ENCODE measurements at regions of chr4 and their contacts with region 1.

Region 1: DNA sequence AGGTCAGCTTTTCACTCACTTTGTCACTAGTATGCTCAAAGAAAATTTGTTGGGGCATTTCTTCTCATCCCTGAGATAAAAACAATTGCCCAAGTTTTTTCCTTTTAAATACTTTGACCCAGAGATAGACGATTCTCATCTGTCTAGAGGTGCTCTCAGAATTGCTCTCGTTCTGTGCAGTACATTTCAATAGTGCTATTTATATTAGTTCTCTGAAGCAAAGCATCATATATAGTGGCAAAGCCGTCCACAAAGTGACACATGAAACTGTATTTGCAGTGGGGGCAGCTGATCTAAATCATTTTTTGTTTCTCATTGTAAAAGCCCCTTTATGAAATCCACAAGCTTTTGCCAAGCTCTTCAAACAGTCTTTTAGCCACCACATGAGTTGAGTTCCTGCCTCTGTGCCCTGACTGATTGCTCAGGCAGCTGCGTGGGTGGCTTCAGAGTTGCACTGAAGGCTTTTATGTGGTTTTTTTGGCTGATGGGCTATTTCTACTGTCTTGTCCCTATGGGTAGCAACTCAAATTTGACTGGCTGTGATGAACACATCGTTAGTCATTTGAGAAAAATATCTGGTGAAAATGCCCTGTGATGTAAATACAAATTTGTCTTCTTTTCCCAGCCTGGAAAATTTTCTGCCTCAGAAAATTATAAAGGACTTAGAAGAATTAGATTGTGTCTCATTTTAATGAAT is 119.1 kb upstream of the OTUD4 start:
- DNase-seq: peak; percentile 89
- ATAC-seq: peak; percentile 95
- H3K4me3 ChIP-seq: no peak overlapping the region
- H3K27ac ChIP-seq: peak overlapping the region; percentile 22; the same call in 1 of the 2 replicates
- H3K4me1 ChIP-seq: peaks cover 13% of the 10 kb centered on the region
- H3K27me3 ChIP-seq: no peaks in the 10 kb centered on the region
- CTCF ChIP-seq: no peak
- EP300 ChIP-seq: peak in 1 of 2 experiments; percentile 73; a peak in 2 of 4 replicates
- POLR2A ChIP-seq: no peak
- RAD21 ChIP-seq: peak; percentile 31; the same call in 1 of the 2 replicates

Region 2: GRCh38 chr4:145315811-145316225 is 16.3 kb after region 1 on chr4:
- CTCF ChIA-PET with region 1: interaction called, 6 read pairs
- POLR2A ChIA-PET with region 1: no interaction called
- RAD21 ChIA-PET with region 1: interaction called, 3 read pairs
- SMC1A ChIA-PET with region 1: interaction called, 13 read pairs
- in situ Hi-C with region 1: no loop called
- intact Hi-C with region 1: no loop called
- DNase-seq: no peak
- ATAC-seq: no peak
- H3K4me3 ChIP-seq: no peak overlapping the region
- H3K27ac ChIP-seq: no peak overlapping the region
- H3K4me1 ChIP-seq: no peaks in the 10 kb centered on the region
- H3K27me3 ChIP-seq: no peaks in the 10 kb centered on the region
- CTCF ChIP-seq: no peak
- EP300 ChIP-seq: no peak
- POLR2A ChIP-seq: no peak
- RAD21 ChIP-seq: no peak

Region 3: DNA sequence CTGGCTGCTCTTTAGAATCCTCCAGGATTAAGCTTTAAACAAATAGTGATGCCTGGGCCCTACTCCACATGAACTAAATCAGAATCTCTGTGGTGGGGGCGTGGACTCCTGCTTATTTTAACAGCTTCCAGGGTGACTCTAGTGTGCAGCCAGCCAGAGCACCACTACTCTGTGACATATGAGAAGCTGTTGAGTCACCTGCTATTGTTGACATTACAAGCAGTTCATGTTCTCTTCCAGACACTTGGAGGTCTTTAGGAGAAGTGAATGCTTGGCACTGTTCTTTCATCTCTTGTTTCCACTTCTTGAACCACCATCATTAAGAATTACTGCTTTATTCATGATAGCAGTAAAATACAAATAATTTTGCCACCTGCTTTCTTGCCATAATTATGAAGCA is 380.0 kb after region 1 on chr4:
- CTCF ChIA-PET with region 1: no interaction called
- POLR2A ChIA-PET with region 1: no interaction called
- RAD21 ChIA-PET with region 1: no interaction called
- SMC1A ChIA-PET with region 1: no interaction called
- in situ Hi-C with region 1: no loop called
- intact Hi-C with region 1: no loop called
- DNase-seq: no peak
- ATAC-seq: no peak
- H3K4me3 ChIP-seq: no peak overlapping the region
- H3K27ac ChIP-seq: no peak overlapping the region
- H3K4me1 ChIP-seq: no peaks in the 10 kb centered on the region
- H3K27me3 ChIP-seq: no peaks in the 10 kb centered on the region
- CTCF ChIP-seq: no peak
- EP300 ChIP-seq: no peak
- POLR2A ChIP-seq: no peak
- RAD21 ChIP-seq: no peak